PC-9 (cell line): ENCODE measurements at regions of chr18 and their contacts with region 1.

Region 1: DNA sequence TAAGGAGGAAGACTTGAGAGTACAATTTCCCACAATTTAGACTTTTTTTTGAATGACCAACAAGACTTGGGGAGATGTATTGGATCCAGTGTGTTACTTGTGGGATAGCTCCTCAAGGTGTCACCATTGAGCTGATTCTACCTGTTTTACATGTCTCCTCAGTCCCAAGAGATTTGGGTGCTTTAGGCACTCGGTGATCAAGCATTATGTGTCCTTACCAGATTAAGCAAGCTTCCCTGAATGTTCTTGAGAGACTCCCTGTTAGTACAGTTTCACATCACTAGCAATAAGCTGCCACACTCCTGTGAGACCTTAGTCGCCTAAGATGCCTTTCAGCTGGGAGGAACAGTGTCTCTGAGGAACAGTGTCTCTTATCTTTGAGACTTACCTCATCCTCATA is 384.3 kb upstream of the SYT4 start:
- DNase-seq: peak; percentile 9 to 40
- H3K4me3 ChIP-seq: no peak overlapping the region
- H3K27ac ChIP-seq: no peak overlapping the region
- H3K4me1 ChIP-seq: no peaks in the 10 kb centered on the region
- H3K27me3 ChIP-seq: no peaks in the 10 kb centered on the region
- CTCF ChIP-seq: peak; percentile 49

Region 2: GRCh38 chr18:43719351-43719750 is 57.8 kb after region 1 on chr18:
- CTCF ChIA-PET with region 1: no interaction called
- POLR2A ChIA-PET with region 1: no interaction called
- intact Hi-C with region 1: loop called (anchors 1 kb)
- DNase-seq: peak; percentile 88 to 90
- H3K4me3 ChIP-seq: no peak overlapping the region
- H3K27ac ChIP-seq: peak overlapping the region; percentile 67
- H3K4me1 ChIP-seq: peaks cover 19% of the 10 kb centered on the region
- H3K27me3 ChIP-seq: no peaks in the 10 kb centered on the region
- CTCF ChIP-seq: no peak

Region 3: DNA sequence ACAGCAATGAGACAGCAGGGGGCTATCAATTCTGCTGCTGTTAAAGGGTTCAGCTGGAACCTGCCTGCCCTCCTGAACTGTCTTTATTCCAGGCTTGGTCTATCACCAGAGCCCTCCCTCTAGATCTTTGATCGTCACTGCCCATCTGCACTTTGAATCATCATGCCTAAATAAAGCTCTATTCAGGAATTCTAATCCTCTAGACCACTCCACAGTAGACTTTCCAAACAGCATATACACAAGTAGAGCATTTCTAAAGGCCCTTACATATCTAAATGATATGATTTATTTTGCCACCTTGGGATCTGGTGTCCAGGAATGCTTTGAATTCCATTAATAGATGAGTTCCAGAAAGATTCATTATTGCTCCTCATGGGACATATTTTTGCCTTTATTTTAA is 157.8 kb after region 1 on chr18:
- CTCF ChIA-PET with region 1: no interaction called
- POLR2A ChIA-PET with region 1: no interaction called
- intact Hi-C with region 1: no loop called
- DNase-seq: no peak
- H3K4me3 ChIP-seq: no peak overlapping the region
- H3K27ac ChIP-seq: no peak overlapping the region
- H3K4me1 ChIP-seq: no peaks in the 10 kb centered on the region
- H3K27me3 ChIP-seq: no peaks in the 10 kb centered on the region
- CTCF ChIP-seq: no peak

Region 4: GRCh38 chr18:44411277-44411905 is 749.8 kb after region 1 on chr18:
- CTCF ChIA-PET with region 1: no interaction called
- POLR2A ChIA-PET with region 1: no interaction called
- intact Hi-C with region 1: no loop called
- DNase-seq: no peak
- H3K4me3 ChIP-seq: no peak overlapping the region
- H3K27ac ChIP-seq: no peak overlapping the region
- H3K4me1 ChIP-seq: no peaks in the 10 kb centered on the region
- H3K27me3 ChIP-seq: no peaks in the 10 kb centered on the region
- CTCF ChIP-seq: no peak